H1 (cell line): ENCODE measurements at regions of chr1 and their contacts with region 1.

Region 1: GRCh38 chr1:208245185-208245705 is 1.1 kb upstream of the PLXNA2 start:
- DNase-seq: peak in 1 of 2 experiments; percentile 87
- H3K4me3 ChIP-seq: peak overlapping the region in 3 of 4 experiments; percentile 43 to 70 (median 44); a peak in 5 of 8 replicates
- H3K27ac ChIP-seq: no peak overlapping the region
- H3K4me1 ChIP-seq: peaks cover 0 to 11% (median 5%) of the 10 kb centered on the region in 4 experiments; a peak in 5 of 7 replicates
- H3K27me3 ChIP-seq: peaks cover 16 to 44% (median 36%) of the 10 kb centered on the region in 4 experiments
- CTCF ChIP-seq: peak; percentile 21 to 78 (median 76)
- EP300 ChIP-seq: no peak
- POLR2A ChIP-seq: no peak
- RAD21 ChIP-seq: peak; percentile 78 to 82

Region 2: GRCh38 chr1:208029381-208030287 is 215.6 kb before region 1 on chr1:
- CTCF ChIA-PET with region 1: interaction called, 315 read pairs
- POLR2A ChIA-PET with region 1: no interaction called
- DNase-seq: no peak
- H3K4me3 ChIP-seq: no peak overlapping the region
- H3K27ac ChIP-seq: no peak overlapping the region
- H3K4me1 ChIP-seq: no peaks in the 10 kb centered on the region
- H3K27me3 ChIP-seq: no peaks in the 10 kb centered on the region
- CTCF ChIP-seq: no peak
- EP300 ChIP-seq: no peak
- POLR2A ChIP-seq: no peak
- RAD21 ChIP-seq: no peak

Region 3: DNA sequence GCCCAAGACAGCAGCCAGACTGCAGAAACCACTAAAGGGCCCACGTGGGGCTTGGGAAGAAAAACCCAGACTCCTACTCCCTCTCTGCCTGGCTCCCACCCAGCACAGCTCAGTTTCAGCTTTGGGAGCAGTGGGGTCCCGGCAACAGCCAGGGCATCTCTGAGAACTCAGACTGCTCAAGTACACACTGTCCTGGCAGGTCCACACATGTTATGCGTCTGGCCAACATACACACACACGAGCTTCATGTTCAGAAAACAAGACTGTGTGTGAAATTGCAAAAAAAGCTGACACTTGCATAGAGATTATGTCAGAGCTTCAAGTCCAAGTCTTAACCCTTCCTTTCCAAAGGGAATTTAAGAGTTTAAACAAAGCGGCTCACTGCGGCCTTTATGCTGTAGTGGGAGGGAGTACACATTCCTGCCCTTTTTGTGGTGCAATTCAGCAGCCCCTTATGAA is 197.7 kb before region 1 on chr1:
- CTCF ChIA-PET with region 1: interaction called, 67 read pairs
- POLR2A ChIA-PET with region 1: no interaction called
- DNase-seq: no peak
- H3K4me3 ChIP-seq: no peak overlapping the region
- H3K27ac ChIP-seq: no peak overlapping the region
- H3K4me1 ChIP-seq: peaks cover 0 to 5% (median 0%) of the 10 kb centered on the region in 4 experiments; a peak in 1 of 7 replicates
- H3K27me3 ChIP-seq: no peaks in the 10 kb centered on the region
- CTCF ChIP-seq: no peak
- EP300 ChIP-seq: no peak
- POLR2A ChIP-seq: no peak
- RAD21 ChIP-seq: no peak

Region 4: DNA sequence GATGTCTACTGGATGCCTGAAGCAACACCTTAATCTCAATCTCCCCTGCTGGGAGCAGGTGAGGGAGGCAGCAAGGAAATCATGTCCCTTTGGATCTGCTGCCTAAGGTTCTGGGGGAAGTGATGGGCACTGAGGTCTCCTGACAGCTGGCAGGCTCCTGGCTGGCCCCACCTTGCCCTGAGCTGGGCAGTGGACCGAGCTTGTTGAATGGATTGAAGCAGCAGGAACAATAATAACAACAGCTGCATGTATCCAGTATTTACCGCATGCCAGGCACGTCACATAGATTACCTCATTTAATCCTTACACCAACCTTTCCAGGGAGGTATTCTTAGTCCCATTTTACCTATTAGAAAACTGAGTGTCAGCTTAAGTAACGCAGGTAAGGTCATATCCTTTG is 134.9 kb before region 1 on chr1:
- CTCF ChIA-PET with region 1: interaction called, 18 read pairs
- POLR2A ChIA-PET with region 1: no interaction called
- DNase-seq: no peak
- H3K4me3 ChIP-seq: no peak overlapping the region
- H3K27ac ChIP-seq: no peak overlapping the region
- H3K4me1 ChIP-seq: peaks cover 0 to 4% (median 0%) of the 10 kb centered on the region in 4 experiments; a peak in 3 of 7 replicates
- H3K27me3 ChIP-seq: no peaks in the 10 kb centered on the region
- CTCF ChIP-seq: no peak
- EP300 ChIP-seq: no peak
- POLR2A ChIP-seq: no peak
- RAD21 ChIP-seq: no peak

Region 5: GRCh38 chr1:208189183-208189582 is 56.1 kb before region 1 on chr1:
- CTCF ChIA-PET with region 1: interaction called, 10 read pairs
- POLR2A ChIA-PET with region 1: no interaction called
- DNase-seq: no peak
- H3K4me3 ChIP-seq: no peak overlapping the region
- H3K27ac ChIP-seq: no peak overlapping the region
- H3K4me1 ChIP-seq: no peaks in the 10 kb centered on the region
- H3K27me3 ChIP-seq: no peaks in the 10 kb centered on the region
- CTCF ChIP-seq: no peak
- EP300 ChIP-seq: no peak
- POLR2A ChIP-seq: no peak
- RAD21 ChIP-seq: no peak

Region 6: GRCh38 chr1:208257351-208257750 is 12.1 kb after region 1 on chr1:
- CTCF ChIA-PET with region 1: interaction called, 20 read pairs
- POLR2A ChIA-PET with region 1: no interaction called
- DNase-seq: no peak
- H3K4me3 ChIP-seq: no peak overlapping the region
- H3K27ac ChIP-seq: no peak overlapping the region
- H3K4me1 ChIP-seq: peaks cover 0 to 11% (median 4%) of the 10 kb centered on the region in 4 experiments; a peak in 5 of 7 replicates
- H3K27me3 ChIP-seq: peaks cover 4 to 21% (median 16%) of the 10 kb centered on the region in 4 experiments; a peak in 6 of 7 replicates
- CTCF ChIP-seq: no peak
- EP300 ChIP-seq: no peak
- POLR2A ChIP-seq: no peak
- RAD21 ChIP-seq: no peak

Region 7: DNA sequence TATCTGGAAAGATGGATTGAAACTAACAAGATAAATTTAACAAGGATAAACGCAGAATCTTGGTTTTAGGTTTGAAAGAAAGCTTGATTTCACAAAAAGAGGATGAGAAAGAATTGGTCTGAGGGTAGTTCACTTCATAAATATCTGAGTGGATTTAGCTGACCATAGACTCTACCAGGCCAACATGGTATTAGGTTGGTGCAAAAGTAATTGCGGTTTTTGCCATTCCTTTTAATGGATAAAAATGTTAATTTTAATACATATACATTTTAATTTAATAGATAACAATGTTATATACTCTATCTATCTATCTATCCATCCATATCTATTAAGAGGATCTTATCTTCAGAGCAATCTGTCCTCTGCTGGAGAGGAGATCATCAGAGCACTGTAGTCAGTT is 69.2 kb after region 1 on chr1:
- CTCF ChIA-PET with region 1: no interaction called
- POLR2A ChIA-PET with region 1: no interaction called
- DNase-seq: no peak
- H3K4me3 ChIP-seq: no peak overlapping the region
- H3K27ac ChIP-seq: no peak overlapping the region
- H3K4me1 ChIP-seq: no peaks in the 10 kb centered on the region
- H3K27me3 ChIP-seq: no peaks in the 10 kb centered on the region
- CTCF ChIP-seq: no peak
- EP300 ChIP-seq: no peak
- POLR2A ChIP-seq: no peak
- RAD21 ChIP-seq: no peak